ENCODE measurements at regions of chr15 and their contacts with region 1.

Region 1: DNA sequence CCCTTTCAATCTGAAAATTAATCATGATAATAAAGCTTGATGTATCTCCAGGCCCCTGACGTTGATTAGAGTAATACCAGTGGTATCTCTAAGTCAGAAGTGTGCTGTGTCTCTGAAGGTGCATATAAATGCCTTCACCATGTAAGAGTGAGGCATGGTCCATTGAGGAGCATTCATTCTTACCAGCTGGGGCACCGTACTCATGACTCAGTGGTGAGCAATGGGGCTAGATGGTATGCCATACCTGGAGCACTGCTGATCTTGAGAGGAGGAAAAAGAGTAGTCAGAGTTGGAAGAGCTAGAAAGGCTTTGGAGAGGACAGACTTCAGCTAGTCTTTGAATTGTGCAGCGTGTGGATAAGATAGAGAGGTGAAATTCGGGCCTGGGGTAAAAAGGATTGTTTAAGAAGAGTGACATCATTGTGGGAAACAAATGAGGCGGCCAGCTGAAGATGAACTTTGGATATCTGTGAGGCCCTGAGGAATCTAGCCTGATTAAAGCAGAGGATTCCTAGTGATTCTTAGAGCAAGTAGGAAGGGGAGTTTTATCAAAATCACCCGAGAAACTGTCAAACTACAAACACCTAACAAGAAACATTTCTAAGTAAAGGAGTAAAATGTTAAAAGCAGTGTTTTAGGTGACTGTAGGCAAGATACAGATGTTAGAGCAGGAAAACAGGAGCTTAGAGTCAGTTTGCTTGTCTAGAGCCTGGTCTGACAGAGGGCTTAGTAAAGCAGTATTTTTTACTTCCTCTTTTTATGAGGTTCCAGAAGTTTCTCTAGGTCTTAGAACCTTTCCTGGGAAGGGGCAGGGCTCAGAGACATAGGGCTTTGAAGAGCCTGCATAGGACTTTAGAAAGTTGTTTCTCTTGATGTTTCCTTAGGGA is 13.6 kb downstream of the TMOD3 start:
- DNase-seq: peak; percentile 58 to 63
- H3K4me3 ChIP-seq: no peak overlapping the region
- H3K4me3 Mint-ChIP-seq: peak overlapping the region; percentile 61
- H3K27ac Mint-ChIP-seq: peak overlapping the region; percentile 83
- H3K4me1 ChIP-seq: peaks cover 55% of the 10 kb centered on the region
- H3K4me1 Mint-ChIP-seq: peaks cover 36% of the 10 kb centered on the region
- H3K27me3 ChIP-seq: no peaks in the 10 kb centered on the region
- H3K27me3 Mint-ChIP-seq: no peaks in the 10 kb centered on the region
- CTCF ChIP-seq: no peak

Region 2: GRCh38 chr15:51829360-51830275 is 13.5 kb before region 1 on chr15 and contains the start of gene TMOD3:
- CTCF ChIA-PET with region 1: no interaction called
- POLR2A ChIA-PET with region 1: interaction called, 9 read pairs
- intact Hi-C with region 1: loop called (anchors 2 kb)
- DNase-seq: peak; percentile 94 to 95
- H3K4me3 ChIP-seq: peak within 1 kb of the TSS; percentile 82
- H3K4me3 Mint-ChIP-seq: peak within 1 kb of the TSS; percentile 89
- H3K27ac Mint-ChIP-seq: peak within 1 kb of the TSS; percentile 79
- H3K4me1 ChIP-seq: peaks cover 7% of the 10 kb centered on the region; the same call in 1 of the 2 replicates
- H3K4me1 Mint-ChIP-seq: peaks cover 12% of the 10 kb centered on the region
- H3K27me3 ChIP-seq: no peaks in the 10 kb centered on the region
- H3K27me3 Mint-ChIP-seq: no peaks in the 10 kb centered on the region
- CTCF ChIP-seq: no peak
- total RNA-seq, gene TMOD3: 46.8 and 54.4 TPM in 2 replicates

Region 3: DNA sequence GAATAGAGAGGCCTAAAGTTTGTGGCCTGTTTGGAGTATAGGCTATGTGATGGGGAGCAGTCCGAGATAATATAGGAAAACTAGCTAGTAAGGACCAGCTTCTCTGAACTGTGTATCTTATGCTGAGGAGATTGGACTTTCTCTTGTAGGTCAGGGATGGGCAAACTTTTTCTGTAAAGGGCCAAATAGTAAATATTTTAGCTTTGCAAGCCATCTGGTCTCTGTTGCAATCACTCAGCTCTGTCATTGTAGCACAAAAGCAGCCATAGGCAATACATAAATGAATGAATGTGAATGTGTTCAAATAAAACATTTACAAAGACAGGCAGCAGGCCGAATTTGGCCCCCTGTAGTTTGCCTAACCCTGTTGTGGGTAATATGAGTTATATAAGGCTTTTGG is 10.9 kb after region 1 on chr15:
- CTCF ChIA-PET with region 1: no interaction called
- POLR2A ChIA-PET with region 1: no interaction called
- intact Hi-C with region 1: loop called (anchors 1 kb)
- DNase-seq: no peak
- H3K4me3 ChIP-seq: no peak overlapping the region
- H3K4me3 Mint-ChIP-seq: no peak overlapping the region
- H3K27ac Mint-ChIP-seq: no peak overlapping the region
- H3K4me1 ChIP-seq: no peaks in the 10 kb centered on the region
- H3K4me1 Mint-ChIP-seq: peaks cover 6% of the 10 kb centered on the region
- H3K27me3 ChIP-seq: no peaks in the 10 kb centered on the region
- H3K27me3 Mint-ChIP-seq: no peaks in the 10 kb centered on the region
- CTCF ChIP-seq: no peak

Region 4: GRCh38 chr15:51874751-51875528 is 31.8 kb after region 1 on chr15:
- CTCF ChIA-PET with region 1: no interaction called
- POLR2A ChIA-PET with region 1: no interaction called
- intact Hi-C with region 1: loop called (anchors 2 kb)
- DNase-seq: peak; percentile 45 to 51
- H3K4me3 ChIP-seq: no peak overlapping the region
- H3K4me3 Mint-ChIP-seq: peak overlapping the region; percentile 40
- H3K27ac Mint-ChIP-seq: peak overlapping the region; percentile 59
- H3K4me1 ChIP-seq: peaks cover 37% of the 10 kb centered on the region
- H3K4me1 Mint-ChIP-seq: peaks cover 27% of the 10 kb centered on the region
- H3K27me3 ChIP-seq: no peaks in the 10 kb centered on the region
- H3K27me3 Mint-ChIP-seq: no peaks in the 10 kb centered on the region
- CTCF ChIP-seq: no peak

Region 5: GRCh38 chr15:51907136-51907914 is 64.2 kb after region 1 on chr15:
- CTCF ChIA-PET with region 1: no interaction called
- POLR2A ChIA-PET with region 1: interaction called, 5 read pairs
- intact Hi-C with region 1: loop called (anchors 1 kb)
- DNase-seq: peak; percentile 82 to 85
- H3K4me3 ChIP-seq: no peak overlapping the region
- H3K4me3 Mint-ChIP-seq: no peak overlapping the region
- H3K27ac Mint-ChIP-seq: peak overlapping the region; percentile 54
- H3K4me1 ChIP-seq: peaks cover 19% of the 10 kb centered on the region
- H3K4me1 Mint-ChIP-seq: peaks cover 9% of the 10 kb centered on the region
- H3K27me3 ChIP-seq: no peaks in the 10 kb centered on the region
- H3K27me3 Mint-ChIP-seq: no peaks in the 10 kb centered on the region
- CTCF ChIP-seq: peak; percentile 41 to 66

Region 6: DNA sequence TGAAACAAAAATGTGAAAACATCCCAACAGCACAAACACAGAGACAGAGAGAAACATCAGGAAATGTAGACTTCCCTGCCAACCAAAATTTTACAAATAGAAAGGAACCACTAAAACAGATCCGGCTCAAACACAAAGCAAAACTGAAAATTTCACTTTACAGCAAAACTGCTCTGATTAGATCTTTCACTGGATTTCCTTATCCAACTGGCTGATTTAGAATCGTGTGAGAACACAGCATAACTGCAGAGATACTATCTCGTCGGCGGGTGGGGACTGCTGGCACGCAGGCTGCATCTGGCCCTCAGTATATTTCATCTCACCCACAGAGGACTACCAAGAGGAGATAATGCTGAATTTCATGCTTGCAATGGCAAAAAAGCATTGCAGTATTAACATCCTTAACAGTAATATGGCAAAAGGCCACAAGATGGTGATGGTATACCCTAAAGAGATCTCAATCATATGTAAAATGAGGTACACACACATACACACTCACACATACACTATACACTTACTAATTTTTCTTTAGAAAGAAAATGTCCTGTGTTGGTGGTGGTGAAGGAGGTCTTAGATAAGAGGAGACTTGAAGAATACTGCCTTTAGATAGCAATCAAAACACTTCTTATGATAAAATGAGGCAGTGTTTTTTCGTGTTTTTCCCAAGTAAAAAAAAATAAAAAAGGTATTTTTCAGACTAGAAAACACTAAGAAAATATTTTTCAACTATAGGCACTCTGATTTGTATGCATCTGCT is 139.1 kb after region 1 on chr15:
- CTCF ChIA-PET with region 1: no interaction called
- POLR2A ChIA-PET with region 1: no interaction called
- intact Hi-C with region 1: no loop called
- DNase-seq: peak in 1 of 2 experiments; percentile 47
- H3K4me3 ChIP-seq: no peak overlapping the region
- H3K4me3 Mint-ChIP-seq: peak overlapping the region; percentile 27
- H3K27ac Mint-ChIP-seq: peak overlapping the region; percentile 42
- H3K4me1 ChIP-seq: no peaks in the 10 kb centered on the region
- H3K4me1 Mint-ChIP-seq: peaks cover 8% of the 10 kb centered on the region
- H3K27me3 ChIP-seq: no peaks in the 10 kb centered on the region
- H3K27me3 Mint-ChIP-seq: no peaks in the 10 kb centered on the region
- CTCF ChIP-seq: peak; percentile 39 to 51

Region 7: GRCh38 chr15:52179278-52180195 is 336.4 kb after region 1 on chr15:
- CTCF ChIA-PET with region 1: no interaction called
- POLR2A ChIA-PET with region 1: no interaction called
- intact Hi-C with region 1: no loop called
- DNase-seq: peak; percentile 80 to 85
- H3K4me3 ChIP-seq: peak overlapping the region; percentile 88
- H3K4me3 Mint-ChIP-seq: peak overlapping the region; percentile 97
- H3K27ac Mint-ChIP-seq: peak overlapping the region; percentile 88
- H3K4me1 ChIP-seq: peaks cover 11% of the 10 kb centered on the region
- H3K4me1 Mint-ChIP-seq: peaks cover 3% of the 10 kb centered on the region
- H3K27me3 ChIP-seq: no peaks in the 10 kb centered on the region
- H3K27me3 Mint-ChIP-seq: no peaks in the 10 kb centered on the region
- CTCF ChIP-seq: no peak